GM10248 (cell line): ENCODE measurements at regions of chr10 and their contacts with region 1.

Region 1: GRCh38 chr10:80699602-80700039 is 161.9 kb downstream of the SH2D4B start:
- DNase-seq: peak; percentile 81
- CTCF ChIP-seq: peak; percentile 97

Region 2: GRCh38 chr10:80356989-80357850 is 342.4 kb before region 1 on chr10:
- CTCF ChIA-PET with region 1: no interaction called
- POLR2A ChIA-PET with region 1: no interaction called
- DNase-seq: no peak
- CTCF ChIP-seq: no peak

Region 3: GRCh38 chr10:80599424-80599847 is 100.2 kb before region 1 on chr10:
- CTCF ChIA-PET with region 1: interaction called, 12 read pairs
- POLR2A ChIA-PET with region 1: no interaction called
- DNase-seq: peak; percentile 76
- CTCF ChIP-seq: peak; percentile 85

Region 4: DNA sequence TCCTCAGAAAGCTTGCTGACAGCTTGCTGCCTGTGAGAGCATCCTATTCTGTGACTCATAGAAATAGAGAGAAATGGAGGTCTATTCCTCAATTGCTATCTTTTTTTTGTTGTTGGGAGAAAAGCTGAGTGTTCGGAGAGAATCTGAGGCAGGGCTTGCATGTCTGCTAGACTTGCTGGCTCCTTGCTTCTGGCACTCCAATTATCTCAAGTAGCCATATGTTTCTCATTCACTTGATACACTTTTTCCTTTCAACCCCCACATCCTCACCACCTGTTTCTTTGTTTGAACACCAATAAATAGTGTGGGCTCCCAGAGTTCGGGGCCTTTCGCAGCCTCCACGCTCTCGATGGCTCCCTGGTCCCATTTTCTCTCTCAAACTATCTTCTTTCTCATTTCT is 10.2 kb after region 1 on chr10:
- CTCF ChIA-PET with region 1: interaction called, 27 read pairs
- POLR2A ChIA-PET with region 1: no interaction called
- DNase-seq: no peak
- CTCF ChIP-seq: no peak

Region 5: DNA sequence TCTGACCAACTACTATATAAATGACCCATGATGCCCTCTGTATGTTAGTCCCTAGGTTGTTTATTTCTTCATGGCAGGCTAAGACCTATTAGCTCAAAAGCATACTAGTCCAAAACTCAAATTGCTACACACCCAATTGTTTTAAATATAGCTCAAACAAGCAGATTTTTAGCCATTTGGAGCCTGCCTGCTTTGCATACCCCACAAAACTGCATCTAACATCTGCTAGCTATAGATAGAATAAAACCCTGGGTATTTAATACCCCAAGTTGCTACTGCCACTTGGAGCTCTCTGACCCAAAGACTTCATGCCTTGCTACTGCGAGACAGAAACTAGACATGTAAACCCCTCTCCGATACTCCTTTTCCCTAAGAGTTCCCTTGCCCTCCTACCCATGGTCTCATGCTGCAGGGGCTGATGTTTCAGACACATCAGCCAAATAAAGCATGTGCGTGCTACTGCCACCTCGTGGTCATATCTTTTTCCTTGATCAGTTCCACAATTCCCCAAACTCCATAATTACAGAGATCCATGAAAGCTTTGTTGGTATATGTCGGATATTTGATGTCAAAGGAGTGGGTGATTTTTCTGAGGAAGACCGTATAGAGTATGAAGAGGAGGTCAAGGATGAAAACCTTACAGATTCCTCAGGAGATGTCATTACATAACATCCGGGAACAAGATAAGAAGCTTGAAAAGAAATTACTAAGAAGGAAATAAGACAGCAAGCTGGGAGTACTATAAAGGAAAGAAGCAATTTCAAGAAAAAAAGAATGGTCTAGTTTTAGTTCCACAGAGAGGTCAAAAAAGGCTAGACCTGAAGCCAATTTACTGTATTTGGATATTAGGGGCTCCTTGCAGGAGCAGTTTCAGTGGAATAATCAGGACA is 224.7 kb after region 1 on chr10:
- CTCF ChIA-PET with region 1: interaction called, 54 read pairs
- POLR2A ChIA-PET with region 1: no interaction called
- DNase-seq: no peak
- CTCF ChIP-seq: peak; percentile 49

Region 6: GRCh38 chr10:81018708-81019365 is 319.2 kb after region 1 on chr10:
- CTCF ChIA-PET with region 1: interaction called, 15 read pairs
- POLR2A ChIA-PET with region 1: no interaction called
- DNase-seq: peak; percentile 43
- CTCF ChIP-seq: peak; percentile 79

Region 7: DNA sequence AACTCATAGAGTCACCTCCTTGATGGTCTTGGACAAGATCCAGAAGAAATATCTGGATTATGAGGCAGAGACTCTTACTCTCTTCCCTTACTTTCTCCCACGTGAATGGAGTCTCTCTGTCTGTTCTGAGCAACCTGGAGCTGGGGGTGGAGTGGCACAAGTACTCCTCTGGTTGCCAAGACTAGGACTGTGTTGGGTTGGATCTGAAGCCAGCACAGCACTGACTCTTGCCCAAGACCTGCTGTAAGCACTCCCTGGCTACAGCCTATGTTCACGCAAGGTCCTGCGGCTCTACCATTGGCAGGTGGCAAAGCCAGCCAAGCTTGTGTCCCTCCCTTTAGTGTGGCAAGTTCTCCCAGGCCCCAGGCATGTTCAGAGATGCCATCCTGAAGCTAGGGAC is 687.2 kb after region 1 on chr10:
- CTCF ChIA-PET with region 1: no interaction called
- POLR2A ChIA-PET with region 1: no interaction called
- DNase-seq: no peak
- CTCF ChIP-seq: no peak